ENCODE measurements at regions of chr5 and their contacts with region 1.

Region 1: DNA sequence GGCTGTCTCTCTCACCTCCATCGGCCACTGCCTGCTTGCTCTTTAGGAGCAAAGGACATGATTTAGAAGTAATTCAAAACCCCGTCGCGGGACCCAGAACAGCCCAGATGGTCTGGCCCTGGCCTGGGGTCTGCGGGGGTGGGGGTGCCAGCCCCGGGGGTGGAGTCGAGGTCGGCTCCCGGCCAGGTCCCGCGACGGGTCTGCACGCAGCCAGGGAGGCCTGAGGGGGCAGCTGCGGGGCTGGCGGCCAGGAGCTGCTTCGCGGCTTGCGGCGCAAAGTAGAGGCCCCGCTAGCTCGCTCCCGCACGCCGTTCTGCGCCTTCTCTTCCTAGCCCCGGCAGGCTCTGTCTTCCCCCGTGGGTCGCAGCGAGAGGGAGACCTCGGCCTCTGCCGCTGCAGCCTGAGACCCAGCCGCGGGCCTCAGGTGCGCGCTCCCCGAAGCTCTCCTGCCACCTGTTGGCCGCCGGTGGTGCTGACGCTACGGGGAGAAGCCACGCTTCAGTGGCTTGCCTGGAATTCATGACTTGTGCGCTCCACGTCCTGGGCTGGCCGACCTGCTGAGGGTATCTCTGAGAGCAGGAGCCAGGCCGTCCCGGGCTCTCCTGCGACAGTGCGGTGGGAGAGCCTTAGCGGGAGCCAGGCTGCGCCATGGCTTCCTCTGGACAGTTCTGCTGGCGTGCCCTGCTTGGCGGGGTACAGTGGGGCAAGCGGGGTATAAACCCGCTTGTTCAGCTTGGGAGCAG is 157.2 kb upstream of the PITX1 start:
- DNase-seq: peak; percentile 67 to 85
- H3K4me3 ChIP-seq: peak overlapping the region; percentile 51 to 60
- H3K27ac ChIP-seq: peak overlapping the region; percentile 19 to 30
- H3K4me1 ChIP-seq: peaks cover 0 to 20% (median 12%) of the 10 kb centered on the region in 4 donors
- H3K27me3 ChIP-seq: no peaks in the 10 kb centered on the region
- CTCF ChIP-seq: peak; percentile 83 to 95

Region 2: DNA sequence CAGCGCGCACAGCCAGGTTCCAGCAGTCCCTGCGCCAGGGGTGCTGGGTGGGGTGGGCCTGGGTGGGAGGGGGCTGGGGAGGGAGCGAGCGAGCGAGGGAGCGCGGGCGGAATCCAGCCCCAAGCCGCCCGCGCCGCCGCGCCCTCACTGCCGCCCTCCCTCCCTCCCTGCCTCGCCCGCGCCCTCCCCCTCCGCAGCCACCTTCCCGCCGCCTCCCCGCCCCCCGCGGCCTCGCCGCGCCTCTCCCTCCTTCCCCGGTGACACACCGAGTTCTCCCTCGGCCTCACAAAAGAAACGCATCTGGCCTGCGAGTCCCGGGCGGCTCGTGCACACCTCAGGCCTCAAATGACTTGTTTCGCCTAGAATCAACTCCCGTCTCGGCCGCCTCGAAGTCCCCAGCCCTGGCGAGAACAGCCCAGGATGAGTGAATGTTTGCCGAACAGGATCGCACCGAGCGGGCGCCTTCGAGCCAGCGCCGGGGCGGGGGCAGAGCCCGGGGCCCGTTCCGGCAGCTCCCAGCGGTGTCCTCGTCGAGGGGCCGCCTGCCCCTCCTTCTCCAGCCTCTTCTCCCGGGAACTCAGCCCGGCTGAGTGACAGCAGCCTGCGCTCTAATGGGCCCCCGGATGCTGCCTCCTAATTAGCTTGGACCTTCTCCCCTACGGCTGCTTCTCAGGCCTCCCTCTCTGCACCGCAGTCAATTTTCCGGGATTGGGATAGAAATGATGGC is 156.9 kb before region 1 on chr5:
- intact Hi-C with region 1: loop called (anchors 10 kb)
- DNase-seq: peak; percentile 62 to 91
- H3K4me3 ChIP-seq: peak overlapping the region; percentile 90
- H3K27ac ChIP-seq: peak overlapping the region; percentile 84 to 96
- H3K4me1 ChIP-seq: peaks cover 0 to 48% (median 26%) of the 10 kb centered on the region in 4 donors
- H3K27me3 ChIP-seq: peaks cover 0 to 38% of the 10 kb centered on the region in 2 donors
- CTCF ChIP-seq: no peak

Region 3: GRCh38 chr5:135332519-135333150 is 141.4 kb after region 1 on chr5:
- intact Hi-C with region 1: loop called (anchors 5 kb)
- DNase-seq: no peak
- H3K4me3 ChIP-seq: no peak overlapping the region
- H3K27ac ChIP-seq: no peak overlapping the region
- H3K4me1 ChIP-seq: peaks cover 0 to 7% (median 0%) of the 10 kb centered on the region in 4 donors
- H3K27me3 ChIP-seq: no peaks in the 10 kb centered on the region
- CTCF ChIP-seq: peak; percentile 53 to 66

Measured in tibial artery (tissue), 4 donors.